ENCODE measurements at regions of chr14 and their contacts with region 1.

Region 1: GRCh38 chr14:75088574-75089373 is 19.3 kb downstream of the ZC2HC1C start:
- DNase-seq: peak in 1 of 2 experiments; percentile 67
- H3K4me3 ChIP-seq: no peak overlapping the region
- H3K27ac ChIP-seq: no peak overlapping the region
- H3K4me1 ChIP-seq: no peaks in the 10 kb centered on the region; a peak in 2 of 7 replicates
- H3K27me3 ChIP-seq: no peaks in the 10 kb centered on the region
- CTCF ChIP-seq: peak in 2 of 3 experiments; percentile 77 to 86; a peak in 3 of 4 replicates
- EP300 ChIP-seq: no peak
- POLR2A ChIP-seq: no peak
- RAD21 ChIP-seq: peak; percentile 90 to 91

Region 2: DNA sequence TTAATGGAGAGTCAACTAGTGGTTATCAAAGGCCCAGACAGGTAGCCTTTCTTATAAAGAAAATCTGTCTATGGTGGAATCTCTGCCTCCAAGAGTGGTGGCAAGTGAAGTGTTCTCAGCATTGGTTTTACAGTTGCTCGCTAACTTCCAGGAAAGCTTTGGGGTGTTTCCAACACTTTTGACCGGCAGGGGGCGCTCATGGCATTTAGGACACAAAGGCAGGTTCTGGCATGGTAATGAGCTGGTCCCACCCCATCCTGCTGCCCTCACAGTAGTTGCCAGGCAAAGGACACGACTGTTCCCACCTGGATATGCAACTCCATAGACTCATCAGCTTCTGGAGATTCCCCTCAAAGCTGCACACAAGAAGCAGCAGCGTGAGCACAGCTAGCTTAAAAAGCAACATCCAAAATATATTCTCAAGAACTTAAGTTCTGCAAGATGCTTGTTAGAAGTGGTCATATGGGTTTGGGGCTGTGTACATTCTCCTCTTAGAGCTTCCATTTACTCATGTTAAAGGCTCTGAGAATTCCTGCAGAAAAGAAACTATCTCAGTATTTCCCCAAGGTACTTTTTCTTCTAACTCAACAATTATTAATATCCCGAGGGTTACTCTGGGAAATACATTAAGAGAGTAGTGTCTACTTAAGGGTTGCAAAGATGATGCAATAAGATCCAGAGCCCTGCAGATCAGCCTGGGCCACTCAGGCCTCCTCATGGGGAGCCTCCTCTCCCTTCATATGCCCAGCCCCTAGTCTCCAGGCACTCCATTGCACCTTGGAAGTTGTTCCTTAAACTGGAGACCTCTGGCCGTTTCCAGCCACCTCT is 227.7 kb before region 1 on chr14:
- CTCF ChIA-PET with region 1: interaction called, 32 read pairs
- POLR2A ChIA-PET with region 1: no interaction called
- DNase-seq: peak; percentile 79 to 98
- H3K4me3 ChIP-seq: no peak overlapping the region
- H3K27ac ChIP-seq: no peak overlapping the region
- H3K4me1 ChIP-seq: 0 out of 7 replicates have a peak, but pooled peaks cover 0 to 2% (median 0%) of the 10 kb centered on the region in 4 experiments
- H3K27me3 ChIP-seq: no peaks in the 10 kb centered on the region
- CTCF ChIP-seq: peak; percentile 81 to 89 (median 88)
- EP300 ChIP-seq: no peak
- POLR2A ChIP-seq: no peak
- RAD21 ChIP-seq: peak; percentile 93 to 95

Region 3: GRCh38 chr14:74905375-74906142 is 183.2 kb before region 1 on chr14:
- CTCF ChIA-PET with region 1: interaction called, 98 read pairs
- POLR2A ChIA-PET with region 1: interaction called, 4 read pairs
- DNase-seq: peak in 1 of 2 experiments; percentile 95
- H3K4me3 ChIP-seq: no peak overlapping the region
- H3K27ac ChIP-seq: no peak overlapping the region
- H3K4me1 ChIP-seq: no peaks in the 10 kb centered on the region; a peak in 1 of 7 replicates
- H3K27me3 ChIP-seq: no peaks in the 10 kb centered on the region
- CTCF ChIP-seq: peak; percentile 84 to 97 (median 92)
- EP300 ChIP-seq: no peak
- POLR2A ChIP-seq: peak in 1 of 2 experiments; percentile 57; a peak in 1 of 3 replicates
- RAD21 ChIP-seq: peak; percentile 69 to 73

Region 4: DNA sequence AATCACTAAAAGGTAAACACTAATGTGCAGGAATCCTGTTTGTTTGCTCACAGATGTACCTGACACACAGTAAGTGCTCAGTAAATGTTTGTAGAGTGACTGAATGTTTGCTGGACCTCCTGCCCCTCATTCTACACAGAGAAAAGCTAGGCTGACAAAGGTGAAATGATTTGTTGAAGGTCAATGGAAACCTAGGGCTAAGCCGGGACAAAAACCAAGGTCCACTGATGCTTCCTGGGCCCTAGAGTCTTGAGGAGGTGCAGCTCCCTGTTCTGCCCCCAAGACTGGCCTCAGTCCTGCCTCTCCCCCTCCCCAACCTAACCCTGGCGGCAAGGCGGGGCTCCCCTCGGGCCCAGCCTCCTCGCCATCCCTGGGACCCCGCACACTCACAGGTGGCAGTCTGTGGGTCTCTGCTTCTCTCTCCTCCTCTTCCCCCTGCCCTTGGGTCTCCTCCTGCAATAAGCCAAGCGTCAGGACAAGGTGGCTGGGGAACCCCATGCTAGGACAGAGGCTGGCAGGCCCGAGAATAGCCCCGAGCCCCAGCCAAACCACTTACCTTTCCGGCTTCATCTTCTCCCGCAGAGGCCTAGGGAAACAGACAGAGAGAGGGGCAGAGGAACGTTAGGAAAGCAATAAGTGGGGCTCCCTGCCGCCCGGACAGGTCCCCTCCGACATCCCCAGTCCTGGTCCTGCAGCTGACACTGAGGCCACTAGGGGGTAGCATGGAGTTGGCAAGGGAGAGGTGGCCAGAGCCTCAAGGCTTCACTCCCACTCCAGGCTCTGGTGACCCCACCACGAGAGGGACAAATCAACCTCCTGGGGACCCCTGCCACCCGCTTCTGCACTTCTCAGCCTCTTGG is 142.7 kb before region 1 on chr14:
- CTCF ChIA-PET with region 1: interaction called, 58 read pairs
- POLR2A ChIA-PET with region 1: interaction called, 5 read pairs
- DNase-seq: peak; percentile 41 to 95
- H3K4me3 ChIP-seq: no peak overlapping the region
- H3K27ac ChIP-seq: no peak overlapping the region
- H3K4me1 ChIP-seq: peaks cover 0 to 6% (median 2%) of the 10 kb centered on the region in 4 experiments; a peak in 3 of 7 replicates
- H3K27me3 ChIP-seq: no peaks in the 10 kb centered on the region
- CTCF ChIP-seq: peak in 2 of 3 experiments; percentile 93 to 97; a peak in 3 of 4 replicates
- EP300 ChIP-seq: no peak
- POLR2A ChIP-seq: 0 out of 3 replicates have a peak, but pooled peaks of 1 of the 2 experiments have one; percentile 54
- RAD21 ChIP-seq: peak; percentile 85 to 91

Region 5: DNA sequence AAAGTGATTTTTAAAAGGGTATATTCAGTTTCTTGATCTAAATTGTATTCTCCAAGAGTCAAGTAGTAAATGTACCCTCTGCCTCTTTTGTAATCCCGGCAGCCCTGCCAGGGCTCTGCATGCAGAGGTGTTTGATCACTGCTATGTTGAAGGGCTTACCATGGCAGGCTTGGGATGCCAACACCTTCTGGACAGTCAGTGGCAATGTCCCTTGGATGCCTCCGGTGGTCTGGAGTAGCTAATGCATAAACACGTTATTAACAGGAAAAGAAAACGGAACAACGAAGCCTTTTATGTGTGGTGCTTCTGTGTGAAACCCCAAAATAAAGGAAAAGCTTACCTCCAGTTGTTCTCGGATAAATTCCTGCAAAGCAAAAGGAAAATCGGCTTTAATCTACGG is 66.1 kb before region 1 on chr14:
- CTCF ChIA-PET with region 1: interaction called, 33 read pairs
- POLR2A ChIA-PET with region 1: no interaction called
- DNase-seq: no peak
- H3K4me3 ChIP-seq: no peak overlapping the region
- H3K27ac ChIP-seq: no peak overlapping the region
- H3K4me1 ChIP-seq: no peaks in the 10 kb centered on the region
- H3K27me3 ChIP-seq: no peaks in the 10 kb centered on the region
- CTCF ChIP-seq: peak; percentile 61 to 66 (median 64)
- EP300 ChIP-seq: no peak
- POLR2A ChIP-seq: no peak
- RAD21 ChIP-seq: peak; percentile 63 to 72

Region 6: DNA sequence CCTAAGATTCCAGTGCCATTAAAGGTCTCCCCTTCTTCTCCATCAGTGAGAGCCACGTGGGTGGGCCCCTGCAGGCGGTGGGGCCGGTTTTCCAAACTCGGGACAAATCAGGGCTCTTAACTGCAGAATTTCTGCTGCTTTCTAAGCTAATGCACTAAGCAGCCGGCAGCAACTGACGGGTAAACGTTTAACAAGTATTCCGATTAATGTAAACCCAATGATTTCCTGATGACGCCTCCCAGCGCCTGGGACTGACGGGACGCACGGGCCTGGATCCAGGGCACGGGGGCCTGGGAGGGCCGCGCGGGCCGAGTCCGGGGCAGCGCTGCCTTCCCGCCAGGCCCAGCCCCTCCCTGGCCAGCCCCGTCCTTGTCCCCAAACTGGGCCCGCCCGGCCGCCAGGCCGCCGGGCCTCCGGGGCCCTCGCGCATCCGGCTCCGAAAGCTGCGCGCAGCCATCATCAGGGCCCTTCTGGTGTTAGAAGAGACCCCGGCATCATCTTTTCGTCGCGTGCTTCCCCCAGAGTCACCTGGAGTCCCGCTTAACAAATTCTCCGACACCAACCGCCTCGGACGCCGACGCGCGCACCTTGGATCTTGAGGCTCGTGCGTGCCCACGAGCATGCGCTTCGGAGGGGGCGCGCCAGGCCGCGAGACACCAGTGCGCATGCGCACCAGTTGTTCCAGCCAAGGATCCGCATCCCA is 37.8 kb before region 1 on chr14 and contains the start of gene MLH3:
- CTCF ChIA-PET with region 1: interaction called, 12 read pairs
- POLR2A ChIA-PET with region 1: no interaction called
- DNase-seq: peak; percentile 87 to 91
- H3K4me3 ChIP-seq: peak within 1 kb of the TSS; percentile 54 to 61 (median 58)
- H3K27ac ChIP-seq: peak within 1 kb of the TSS; percentile 67
- H3K4me1 ChIP-seq: peaks cover 0 to 4% (median 0%) of the 10 kb centered on the region in 4 experiments; a peak in 3 of 7 replicates
- H3K27me3 ChIP-seq: no peaks in the 10 kb centered on the region
- CTCF ChIP-seq: no peak
- EP300 ChIP-seq: no peak
- POLR2A ChIP-seq: peak; percentile 71 to 89
- RAD21 ChIP-seq: no peak
- total RNA-seq, gene MLH3: 19.1 and 20.1 TPM in 2 replicates

Region 7: GRCh38 chr14:75069045-75069810 is 19.5 kb before region 1 on chr14 and contains the start of gene ZC2HC1C:
- CTCF ChIA-PET with region 1: interaction called, 39 read pairs
- POLR2A ChIA-PET with region 1: interaction called, 9 read pairs
- DNase-seq: peak; percentile 83 to 98
- H3K4me3 ChIP-seq: peak within 1 kb of the TSS; percentile 70 to 90 (median 82)
- H3K27ac ChIP-seq: peak within 1 kb of the TSS; percentile 83
- H3K4me1 ChIP-seq: peaks cover 0 to 3% (median under 1%) of the 10 kb centered on the region in 4 experiments; a peak in 2 of 7 replicates
- H3K27me3 ChIP-seq: no peaks in the 10 kb centered on the region
- CTCF ChIP-seq: peak in 1 of 3 experiments; percentile 2; a peak in 1 of 4 replicates
- EP300 ChIP-seq: 0 out of 3 replicates have a peak, but pooled peaks of 1 of the 2 experiments have one; percentile 0
- POLR2A ChIP-seq: peak; percentile 64 to 79
- RAD21 ChIP-seq: no peak
- total RNA-seq, gene ZC2HC1C: 1.2 and 1.7 TPM in 2 replicates

Measured in H1 (cell line).